A549 (cell line): ENCODE measurements at regions of chr9 and their contacts with region 1.

Region 1: DNA sequence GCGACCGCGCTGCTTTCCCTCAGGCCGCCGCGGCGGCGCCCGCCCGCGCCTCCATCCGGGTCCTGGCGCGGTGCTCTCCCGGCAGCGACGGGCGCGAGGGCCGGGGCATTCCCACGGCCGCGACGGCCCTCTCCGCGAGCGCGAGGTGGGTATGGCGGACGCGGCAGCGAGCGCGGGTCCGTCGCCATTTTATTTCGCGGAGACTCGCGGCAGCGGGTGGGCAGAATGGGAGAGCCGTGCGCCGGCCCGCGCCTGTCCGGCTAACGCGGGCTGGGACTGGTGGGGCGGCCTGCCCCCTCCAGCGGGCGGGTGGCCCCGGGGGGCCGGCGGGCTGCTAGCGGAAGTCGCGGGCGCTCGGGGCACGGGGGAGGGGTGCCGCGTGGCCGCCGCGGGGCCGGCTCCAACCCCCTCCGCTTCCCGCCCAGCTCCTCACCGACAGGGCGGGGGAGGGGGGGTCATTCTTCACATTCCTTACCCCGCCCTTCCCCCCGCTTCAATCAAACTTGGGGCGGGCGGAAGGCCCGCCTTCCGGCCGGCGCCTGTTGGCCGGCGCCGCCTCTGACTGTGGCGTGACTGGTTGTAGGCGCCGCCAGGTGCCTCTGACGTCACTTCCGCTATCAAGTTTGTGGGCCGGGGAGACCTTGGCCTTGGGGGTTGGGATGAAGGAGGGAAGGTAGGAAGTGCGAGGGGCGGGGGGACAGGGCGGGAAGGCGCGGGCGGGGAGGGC is 82.1 kb downstream of the PTPDC1 start:
- DNase-seq: peak; percentile 94 to 99
- ATAC-seq: peak; percentile 82 to 87
- H3K4me3 ChIP-seq: peak overlapping the region; percentile 96
- H3K27ac ChIP-seq: peak overlapping the region; percentile 99 to 100
- H3K4me1 ChIP-seq: peaks cover 37% of the 10 kb centered on the region
- CTCF ChIP-seq: no peak
- EP300 ChIP-seq: peak in 1 of 2 experiments; percentile 59; a peak in 2 of 5 replicates
- POLR2A ChIP-seq: peak; percentile 78
- RAD21 ChIP-seq: no peak

Region 2: DNA sequence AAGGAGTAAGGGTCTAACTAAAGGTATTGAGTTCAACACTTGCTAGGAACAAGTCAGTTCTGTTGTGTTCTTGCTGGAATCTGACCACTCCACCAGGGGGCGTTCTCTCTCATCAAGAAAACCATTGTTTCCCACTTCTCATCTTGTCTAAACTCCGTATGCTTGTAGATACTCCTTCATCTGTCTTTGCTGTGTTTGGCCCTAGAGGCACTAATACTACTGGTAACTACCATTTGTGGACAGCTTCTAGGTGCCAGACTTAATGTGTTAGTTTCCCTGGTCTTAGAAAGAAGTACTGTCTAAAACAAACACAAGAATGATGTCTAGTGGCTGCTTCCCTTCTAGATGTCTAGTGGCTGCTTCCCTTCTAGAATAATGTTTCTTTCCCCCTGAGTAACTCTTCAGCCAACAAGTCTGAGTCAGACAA is 100.9 kb before region 1 on chr9:
- CTCF ChIA-PET with region 1: interaction called, 12 read pairs
- POLR2A ChIA-PET with region 1: no interaction called
- DNase-seq: peak; percentile 34 to 84
- ATAC-seq: peak; percentile 68 to 87
- H3K4me3 ChIP-seq: no peak overlapping the region
- H3K27ac ChIP-seq: 0 out of 6 replicates have a peak overlapping the region, but pooled peaks of 1 of the 2 experiments have one; percentile 23
- H3K4me1 ChIP-seq: no peaks in the 10 kb centered on the region
- CTCF ChIP-seq: peak; percentile 85
- EP300 ChIP-seq: no peak
- POLR2A ChIP-seq: no peak
- RAD21 ChIP-seq: peak; percentile 81 to 82

Region 3: GRCh38 chr9:94139672-94140417 is 26.6 kb before region 1 on chr9:
- CTCF ChIA-PET with region 1: interaction called, 4 read pairs
- POLR2A ChIA-PET with region 1: interaction called, 25 read pairs
- DNase-seq: peak; percentile 71 to 72
- ATAC-seq: peak; percentile 84 to 88
- H3K4me3 ChIP-seq: no peak overlapping the region
- H3K27ac ChIP-seq: peak overlapping the region; percentile 77 to 88
- H3K4me1 ChIP-seq: peaks cover 26% of the 10 kb centered on the region
- CTCF ChIP-seq: no peak
- EP300 ChIP-seq: no peak
- POLR2A ChIP-seq: no peak
- RAD21 ChIP-seq: no peak

Region 4: DNA sequence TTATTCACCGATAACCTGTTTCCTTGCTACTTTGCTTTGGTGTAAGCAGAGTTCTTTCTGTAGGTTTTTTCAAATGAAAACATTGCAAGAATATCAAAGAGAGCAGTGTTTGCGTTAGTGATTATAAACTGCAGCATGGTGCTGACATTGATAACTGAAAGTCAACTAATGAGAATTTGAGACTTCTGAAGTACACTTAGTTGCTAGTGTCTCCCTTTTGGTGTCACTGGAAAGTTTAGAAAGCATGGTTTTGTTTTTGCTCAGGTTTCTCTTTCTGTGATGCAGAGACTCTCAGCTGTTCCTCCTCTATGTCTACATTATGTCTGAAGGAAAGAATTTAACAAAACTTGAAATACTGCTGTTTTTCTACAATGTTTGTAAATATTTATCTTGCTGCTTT is 12.5 kb after region 1 on chr9:
- CTCF ChIA-PET with region 1: interaction called, 6 read pairs
- POLR2A ChIA-PET with region 1: interaction called, 29 read pairs
- DNase-seq: no peak
- ATAC-seq: no peak
- H3K4me3 ChIP-seq: no peak overlapping the region
- H3K27ac ChIP-seq: no peak overlapping the region
- H3K4me1 ChIP-seq: peaks cover 42% of the 10 kb centered on the region
- CTCF ChIP-seq: no peak
- EP300 ChIP-seq: no peak
- POLR2A ChIP-seq: no peak
- RAD21 ChIP-seq: no peak